CD8-positive, alpha-beta T cell (primary cell): ENCODE measurements at regions of chr13 and their contacts with region 1.

Region 1: GRCh38 chr13:42110410-42111155 is 62.1 kb downstream of the DGKH start:
- DNase-seq: peak in 6 of 9 experiments; percentile 13 to 78 (median 44)
- ATAC-seq: peak; percentile 81
- H3K4me3 ChIP-seq: no peak overlapping the region
- H3K4me3 Mint-ChIP-seq: no peak overlapping the region
- H3K27ac ChIP-seq: no peak overlapping the region
- H3K27ac Mint-ChIP-seq: no peak overlapping the region
- H3K4me1 ChIP-seq: no peaks in the 10 kb centered on the region
- H3K4me1 Mint-ChIP-seq: peaks cover 9% of the 10 kb centered on the region
- H3K27me3 ChIP-seq: no peaks in the 10 kb centered on the region
- H3K27me3 Mint-ChIP-seq: no peaks in the 10 kb centered on the region
- CTCF ChIP-seq: peak; percentile 77

Region 2: DNA sequence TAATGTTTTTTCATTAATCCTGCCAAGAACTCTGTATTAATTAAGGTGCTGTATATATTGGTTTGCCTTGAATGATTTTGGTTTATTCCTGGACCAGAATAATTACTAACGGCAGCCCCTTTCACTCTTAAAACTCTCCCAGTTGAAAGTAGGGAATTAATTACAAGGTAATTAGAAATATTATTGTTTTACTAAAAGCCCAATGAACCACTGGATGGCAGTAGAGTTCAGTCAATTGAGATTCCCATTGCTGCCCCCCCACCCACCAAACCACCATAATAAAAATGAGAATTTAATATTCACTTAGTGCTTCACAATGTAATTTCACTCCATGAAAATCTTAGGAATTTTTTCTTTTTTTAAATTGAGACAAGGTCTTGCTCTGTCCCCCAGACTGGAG is 1035.5 kb before region 1 on chr13:
- CTCF ChIA-PET with region 1: no interaction called
- POLR2A ChIA-PET with region 1: no interaction called
- intact Hi-C with region 1: loop called in 1 of 2 experiments (anchors 2 kb)
- DNase-seq: peak in 5 of 9 experiments; percentile 23 to 70 (median 49)
- ATAC-seq: peak; percentile 63
- H3K4me3 ChIP-seq: no peak overlapping the region
- H3K4me3 Mint-ChIP-seq: no peak overlapping the region
- H3K27ac ChIP-seq: no peak overlapping the region
- H3K27ac Mint-ChIP-seq: no peak overlapping the region
- H3K4me1 ChIP-seq: no peaks in the 10 kb centered on the region
- H3K4me1 Mint-ChIP-seq: no peaks in the 10 kb centered on the region
- H3K27me3 ChIP-seq: no peaks in the 10 kb centered on the region
- H3K27me3 Mint-ChIP-seq: no peaks in the 10 kb centered on the region
- CTCF ChIP-seq: peak; percentile 72

Region 3: DNA sequence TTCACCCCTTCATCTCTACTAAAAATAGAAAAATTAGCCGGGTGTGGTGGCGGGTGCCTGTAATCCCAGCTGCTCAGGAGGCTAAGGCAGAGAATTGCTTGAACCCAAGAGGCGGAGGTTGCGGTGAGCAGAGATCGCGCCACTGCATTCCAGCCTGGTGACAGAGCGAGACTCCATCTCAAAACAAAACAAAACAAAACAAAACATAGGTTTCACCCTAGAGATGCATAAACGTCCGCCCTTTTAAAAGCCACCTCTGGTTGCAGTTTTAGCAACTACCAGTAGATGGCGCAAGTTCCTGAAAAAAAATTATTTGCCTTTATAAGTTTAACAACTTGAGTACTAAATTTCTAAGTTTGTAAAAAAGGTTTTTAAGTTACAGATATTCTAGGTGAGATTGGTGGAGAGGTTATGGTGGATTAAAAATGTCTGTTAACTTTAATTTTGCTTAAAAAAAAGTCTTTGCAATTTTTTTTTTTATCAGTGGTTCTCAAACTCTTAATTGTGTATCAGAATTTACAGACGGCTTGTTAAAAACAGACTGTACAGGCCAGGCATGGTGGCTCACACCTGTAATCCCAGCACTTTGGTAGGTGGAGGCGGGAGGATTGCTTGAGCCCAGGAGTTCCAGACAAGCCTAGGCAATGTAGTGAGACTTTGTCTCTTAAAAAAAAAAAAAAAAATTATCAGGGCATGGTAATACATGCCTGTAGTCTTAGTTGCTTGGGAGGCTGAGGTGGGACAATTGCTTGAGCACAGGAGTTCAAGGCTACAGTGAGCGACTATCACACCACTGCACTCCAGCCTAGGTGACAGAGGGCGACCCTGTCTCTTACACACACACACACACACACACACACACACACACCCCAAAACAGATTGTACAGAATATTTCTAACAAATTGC is 757.4 kb before region 1 on chr13:
- CTCF ChIA-PET with region 1: interaction called, 3 read pairs
- POLR2A ChIA-PET with region 1: no interaction called
- intact Hi-C with region 1: loop called (anchors 5 to 10 kb)
- DNase-seq: peak; percentile 21 to 83 (median 57)
- ATAC-seq: peak; percentile 55
- H3K4me3 ChIP-seq: no peak overlapping the region
- H3K4me3 Mint-ChIP-seq: peak overlapping the region; percentile 54
- H3K27ac ChIP-seq: peak overlapping the region in 1 of 2 experiments; percentile 58
- H3K27ac Mint-ChIP-seq: peak overlapping the region; percentile 94
- H3K4me1 ChIP-seq: peaks cover 49% of the 10 kb centered on the region
- H3K4me1 Mint-ChIP-seq: peaks cover 59% of the 10 kb centered on the region
- H3K27me3 ChIP-seq: no peaks in the 10 kb centered on the region
- H3K27me3 Mint-ChIP-seq: no peaks in the 10 kb centered on the region
- CTCF ChIP-seq: peak; percentile 95

Region 4: GRCh38 chr13:41668130-41668757 is 442.3 kb before region 1 on chr13:
- CTCF ChIA-PET with region 1: interaction called, 103 read pairs
- POLR2A ChIA-PET with region 1: no interaction called
- intact Hi-C with region 1: loop called (anchors 1 kb)
- DNase-seq: peak in 5 of 9 experiments; percentile 17 to 74 (median 20)
- ATAC-seq: peak; percentile 51
- H3K4me3 ChIP-seq: no peak overlapping the region
- H3K4me3 Mint-ChIP-seq: no peak overlapping the region
- H3K27ac ChIP-seq: no peak overlapping the region
- H3K27ac Mint-ChIP-seq: no peak overlapping the region
- H3K4me1 ChIP-seq: no peaks in the 10 kb centered on the region
- H3K4me1 Mint-ChIP-seq: peaks cover 3% of the 10 kb centered on the region
- H3K27me3 ChIP-seq: no peaks in the 10 kb centered on the region
- H3K27me3 Mint-ChIP-seq: no peaks in the 10 kb centered on the region
- CTCF ChIP-seq: peak; percentile 73

Region 5: DNA sequence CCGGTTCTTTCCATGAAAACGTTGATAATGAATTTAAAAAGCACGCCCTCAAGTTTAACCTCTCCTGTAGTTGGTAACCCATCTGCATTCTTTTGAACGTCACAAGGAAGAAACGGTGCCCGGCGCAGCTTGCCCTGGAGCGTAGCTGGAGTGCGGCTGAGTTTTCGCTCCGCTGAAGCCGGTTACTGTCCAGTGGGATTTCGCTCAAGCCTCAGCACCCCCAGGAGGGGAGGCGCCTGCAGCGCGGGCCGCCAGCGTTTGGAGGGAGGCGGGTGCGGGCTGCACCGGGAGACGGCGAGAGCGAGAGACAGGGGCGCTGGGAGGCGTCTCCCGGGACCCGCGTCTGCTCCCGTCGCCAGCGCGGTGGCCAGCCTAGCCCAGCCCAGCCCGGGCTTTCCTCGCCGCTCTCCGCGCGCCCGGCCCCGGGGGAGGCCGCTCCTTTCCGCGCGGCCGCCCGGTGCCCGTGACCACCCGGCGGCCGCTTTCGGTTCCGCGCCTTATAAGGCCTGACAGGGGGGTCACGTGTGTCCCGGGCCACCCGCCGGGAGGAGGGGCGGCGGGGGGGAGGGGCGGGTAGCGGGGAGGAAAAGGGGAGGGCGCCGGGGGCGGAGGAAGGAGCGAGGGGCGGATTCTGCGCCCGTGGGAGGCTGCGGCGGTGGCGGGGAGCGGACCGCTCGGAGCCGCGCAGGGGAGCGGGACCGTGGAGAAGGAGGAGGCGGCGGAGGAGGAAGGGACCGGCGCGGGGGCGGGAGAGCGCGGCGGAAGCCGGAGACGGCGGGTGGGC is 70.4 kb before region 1 on chr13:
- CTCF ChIA-PET with region 1: no interaction called
- POLR2A ChIA-PET with region 1: no interaction called
- intact Hi-C with region 1: loop called in 1 of 2 experiments (anchors 2 kb)
- DNase-seq: peak; percentile 70 to 94 (median 88)
- ATAC-seq: peak; percentile 81
- H3K4me3 ChIP-seq: peak overlapping the region; percentile 47 to 88
- H3K4me3 Mint-ChIP-seq: peak overlapping the region; percentile 91
- H3K27ac ChIP-seq: peak overlapping the region; percentile 23 to 72
- H3K27ac Mint-ChIP-seq: peak overlapping the region; percentile 72
- H3K4me1 ChIP-seq: peaks cover 9% of the 10 kb centered on the region
- H3K4me1 Mint-ChIP-seq: peaks cover 16% of the 10 kb centered on the region
- H3K27me3 ChIP-seq: no peaks in the 10 kb centered on the region
- H3K27me3 Mint-ChIP-seq: no peaks in the 10 kb centered on the region
- CTCF ChIP-seq: no peak